Heart right ventricle (tissue), 16 donors: ENCODE measurements at regions of chr3 and their contacts with region 1.

Region 1: GRCh38 chr3:62665598-62666437 is 209.4 kb downstream of the CADPS start:
- DNase-seq: peak; percentile 64
- ATAC-seq: peak; percentile 66 to 89 (median 82)
- H3K4me3 ChIP-seq: peak overlapping the region in 1 of 10 donors; percentile 20
- H3K27ac ChIP-seq: no peak overlapping the region
- H3K4me1 ChIP-seq: peaks cover 0 to 15% (median 0%) of the 10 kb centered on the region in 9 donors
- H3K27me3 ChIP-seq: no peaks in the 10 kb centered on the region
- CTCF ChIP-seq: peak; percentile 41 to 76 (median 61)

Region 2: GRCh38 chr3:62873761-62874647 is 208.2 kb after region 1 on chr3:
- intact Hi-C with region 1: loop called in 1 of 10 experiments (anchors 10 kb)
- DNase-seq: peak; percentile 52 to 70
- ATAC-seq: peak; percentile 73 to 94 (median 85)
- H3K4me3 ChIP-seq: peak overlapping the region; percentile 36 to 65 (median 60)
- H3K27ac ChIP-seq: peak overlapping the region; percentile 78 to 96 (median 90)
- H3K4me1 ChIP-seq: peaks cover 0 to 26% (median 6%) of the 10 kb centered on the region in 9 donors
- H3K27me3 ChIP-seq: peaks cover 0 to 55% (median 33%) of the 10 kb centered on the region in 7 donors
- CTCF ChIP-seq: peak in 1 of 9 donors; percentile 2

Region 3: DNA sequence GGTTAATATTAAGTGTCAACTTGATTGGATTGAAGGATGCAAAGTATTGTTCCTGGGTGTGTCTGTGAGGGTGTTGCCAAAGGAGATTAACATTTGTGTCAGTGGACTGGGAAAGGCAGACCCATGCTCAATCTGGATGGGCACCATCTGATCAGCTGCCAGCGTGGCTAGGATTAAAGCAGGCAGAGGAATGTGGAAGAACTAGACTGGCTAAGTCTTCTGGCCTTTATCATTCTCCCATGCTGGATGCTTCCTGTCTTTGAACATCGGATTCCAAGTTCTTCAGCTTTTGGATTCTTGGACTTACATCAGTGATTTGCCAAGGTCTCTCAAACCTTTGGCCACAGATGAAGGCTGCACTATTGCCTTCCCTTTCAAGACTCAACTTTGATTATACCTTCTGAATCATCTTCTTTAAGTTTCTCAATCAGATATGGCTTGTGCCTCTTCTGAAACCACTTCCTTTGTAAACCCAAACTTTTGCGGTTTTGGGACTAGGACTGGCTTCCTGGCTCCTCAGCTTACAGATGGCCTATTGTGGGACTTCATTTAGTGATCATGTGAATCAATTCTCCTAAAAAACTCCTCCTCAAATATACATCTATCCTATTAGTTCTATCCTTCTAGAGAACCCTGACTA is 256.4 kb after region 1 on chr3:
- intact Hi-C with region 1: loop called in 5 of 10 experiments (anchors 2 to 10 kb)
- DNase-seq: no peak
- ATAC-seq: no peak
- H3K4me3 ChIP-seq: no peak overlapping the region
- H3K27ac ChIP-seq: no peak overlapping the region
- H3K4me1 ChIP-seq: no peaks in the 10 kb centered on the region
- H3K27me3 ChIP-seq: no peaks in the 10 kb centered on the region
- CTCF ChIP-seq: no peak

Region 4: DNA sequence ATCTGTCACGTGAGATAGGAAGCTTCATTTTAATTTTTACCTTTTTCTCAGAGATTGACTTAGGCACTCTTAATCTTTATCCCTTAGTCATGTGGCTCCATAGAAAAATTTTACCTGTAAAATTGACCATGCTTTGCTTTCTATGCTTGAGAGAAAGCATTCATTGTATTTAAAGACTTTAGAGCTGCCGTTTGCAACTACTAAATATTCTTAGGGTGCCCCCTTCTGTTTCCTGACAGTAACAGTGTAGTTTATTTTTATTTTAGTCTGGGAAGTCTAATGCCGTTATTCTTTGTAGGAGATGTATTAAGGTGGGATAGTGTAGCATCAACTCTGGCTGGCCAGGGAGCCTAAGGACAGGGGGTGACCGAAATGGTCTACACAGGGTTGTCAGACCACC is 527.8 kb after region 1 on chr3:
- intact Hi-C with region 1: loop called (anchors 1 to 10 kb)
- DNase-seq: no peak
- ATAC-seq: peak in 2 of 8 donors; percentile 37 to 49
- H3K4me3 ChIP-seq: no peak overlapping the region
- H3K27ac ChIP-seq: no peak overlapping the region
- H3K4me1 ChIP-seq: no peaks in the 10 kb centered on the region
- H3K27me3 ChIP-seq: no peaks in the 10 kb centered on the region
- CTCF ChIP-seq: peak; percentile 4 to 63 (median 41)

Region 5: GRCh38 chr3:63228087-63229023 is 562.5 kb after region 1 on chr3:
- intact Hi-C with region 1: loop called in 1 of 10 experiments (anchors 10 kb)
- DNase-seq: peak in 1 of 2 donors; percentile 5
- ATAC-seq: peak in 1 of 8 donors; percentile 47
- H3K4me3 ChIP-seq: peak overlapping the region in 1 of 10 donors; percentile 18
- H3K27ac ChIP-seq: no peak overlapping the region
- H3K4me1 ChIP-seq: no peaks in the 10 kb centered on the region
- H3K27me3 ChIP-seq: no peaks in the 10 kb centered on the region
- CTCF ChIP-seq: peak in 8 of 9 donors; percentile 32 to 65 (median 52)